Psoas muscle (tissue), 8 donors: ENCODE measurements at regions of chr3 and their contacts with region 1.

Region 1: GRCh38 chr3:159763602-159764489 is 224.8 kb upstream of the IL12A start:
- DNase-seq: peak; percentile 67 to 75
- ATAC-seq: peak; percentile 59 to 79 (median 68)
- H3K4me3 ChIP-seq: peak overlapping the region; percentile 82
- H3K27ac ChIP-seq: peak overlapping the region; percentile 86
- H3K4me1 ChIP-seq: peaks cover 15% of the 10 kb centered on the region
- H3K27me3 ChIP-seq: peaks cover 0 to 42% (median 0%) of the 10 kb centered on the region in 3 donors
- CTCF ChIP-seq: peak; percentile 31

Region 2: DNA sequence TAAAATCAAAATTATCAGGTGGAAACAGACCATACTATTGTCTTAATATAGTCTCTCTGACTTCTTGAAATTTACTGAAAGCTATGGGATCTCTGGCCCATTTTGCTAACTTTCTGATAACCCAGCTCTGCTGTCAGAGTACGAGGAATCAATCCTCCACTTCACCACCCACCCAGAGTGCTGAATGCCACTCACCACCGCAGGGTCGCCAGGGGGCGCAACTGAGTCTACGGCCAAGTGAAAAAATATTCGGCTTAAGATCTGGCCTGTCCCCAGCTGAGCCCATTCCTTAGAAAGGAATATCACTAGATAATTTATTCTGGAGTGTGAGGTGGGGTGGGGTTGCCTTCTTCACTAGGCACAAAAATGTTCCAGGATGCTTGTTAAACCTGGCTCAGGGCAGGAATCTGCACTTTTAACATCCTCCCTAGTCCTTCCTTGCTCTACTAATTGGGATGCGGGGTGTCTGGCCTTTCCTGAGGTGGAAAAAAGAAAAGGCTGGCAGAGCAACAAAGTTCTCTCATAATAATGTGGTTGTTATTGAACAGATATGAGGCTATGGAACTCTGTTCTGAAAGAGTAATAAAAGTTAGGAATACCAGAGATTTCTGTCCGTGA is 441.4 kb before region 1 on chr3:
- intact Hi-C with region 1: loop called in 1 of 2 experiments (anchors 5 kb)
- DNase-seq: peak; percentile 21 to 53
- ATAC-seq: no peak
- H3K4me3 ChIP-seq: no peak overlapping the region
- H3K27ac ChIP-seq: no peak overlapping the region
- H3K4me1 ChIP-seq: no peaks in the 10 kb centered on the region
- H3K27me3 ChIP-seq: no peaks in the 10 kb centered on the region
- CTCF ChIP-seq: peak; percentile 55

Region 3: GRCh38 chr3:159711560-159712333 is 52.1 kb before region 1 on chr3:
- intact Hi-C with region 1: loop called in 1 of 2 experiments (anchors 5 kb)
- DNase-seq: peak in 1 of 2 donors; percentile 17
- ATAC-seq: peak in 3 of 4 donors; percentile 37 to 79 (median 71)
- H3K4me3 ChIP-seq: no peak overlapping the region
- H3K27ac ChIP-seq: no peak overlapping the region
- H3K4me1 ChIP-seq: no peaks in the 10 kb centered on the region
- H3K27me3 ChIP-seq: no peaks in the 10 kb centered on the region
- CTCF ChIP-seq: no peak